Astrocyte of the cerebellum (primary cell): ENCODE measurements at regions of chr5 and their contacts with region 1.

Region 1: GRCh38 chr5:39424736-39425637 is at the start of gene DAB2:
- DNase-seq: peak; percentile 85
- H3K4me3 ChIP-seq: peak within 1 kb of the TSS; percentile 87
- CTCF ChIP-seq: peak; percentile 78

Region 2: GRCh38 chr5:38556599-38557305 is 868.2 kb before region 1 on chr5 and contains the start of gene LIFR:
- in situ Hi-C with region 1: no loop called
- DNase-seq: peak; percentile 44
- H3K4me3 ChIP-seq: peak within 1 kb of the TSS; percentile 83
- CTCF ChIP-seq: peak; percentile 5

Region 3: GRCh38 chr5:39480771-39481170 is 55.8 kb after region 1 on chr5:
- in situ Hi-C with region 1: loop called (anchors 5 kb)
- DNase-seq: no peak
- H3K4me3 ChIP-seq: no peak overlapping the region
- CTCF ChIP-seq: no peak

Region 4: GRCh38 chr5:39543335-39543734 is 118.3 kb after region 1 on chr5:
- in situ Hi-C with region 1: loop called (anchors 5 kb)
- DNase-seq: no peak
- H3K4me3 ChIP-seq: no peak overlapping the region
- CTCF ChIP-seq: no peak